ENCODE measurements at regions of chr2 and their contacts with region 1.

Region 1: DNA sequence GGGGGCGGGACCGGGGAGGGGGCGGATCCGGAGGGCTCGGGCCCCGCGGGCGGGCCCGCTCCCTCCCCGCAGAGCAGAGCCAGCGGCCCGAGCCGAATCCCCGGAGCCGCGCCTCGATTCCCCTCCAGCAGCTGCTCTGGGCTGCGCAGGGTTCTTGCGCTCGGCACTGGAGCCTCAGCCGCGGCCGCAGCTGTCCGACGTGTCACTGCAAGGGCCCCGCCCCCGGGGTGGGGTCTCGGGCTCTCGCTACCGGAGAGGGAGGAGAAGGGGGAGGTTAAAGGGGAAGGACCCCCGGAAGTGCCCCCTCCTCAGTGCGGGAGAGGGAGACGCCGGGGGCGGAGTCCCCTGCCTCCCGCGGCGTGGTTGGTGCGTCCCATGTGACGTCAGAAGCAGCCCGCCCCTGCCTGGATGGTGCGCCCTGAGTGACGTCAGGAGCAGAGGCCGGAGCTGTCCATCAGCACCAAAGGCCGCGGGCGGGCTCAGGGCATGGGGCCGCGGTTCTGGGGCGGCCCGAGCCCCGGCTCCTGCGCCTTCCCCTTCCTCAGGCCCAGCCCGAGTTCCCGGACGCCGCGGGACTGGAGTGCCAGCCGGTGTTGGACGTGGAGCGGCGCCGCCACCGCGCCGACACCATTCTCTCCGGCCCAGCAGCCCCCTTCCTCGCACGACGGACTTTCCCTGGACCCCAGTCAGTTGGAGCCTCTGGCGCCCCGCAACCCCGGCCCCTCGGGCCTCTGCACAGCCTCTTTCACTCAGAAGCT is at the starts of genes CHPF and TMEM198:
- DNase-seq: peak; percentile 98 to 99
- H3K4me3 ChIP-seq: peak within 1 kb of the TSS; percentile 71 to 98
- H3K27ac ChIP-seq: peak within 1 kb of the TSS; percentile 86 to 92
- H3K4me1 ChIP-seq: peaks cover 9 to 29% (median 24%) of the 10 kb centered on the region in 4 donors
- H3K27me3 ChIP-seq: no peaks in the 10 kb centered on the region
- CTCF ChIP-seq: no peak

Region 2: DNA sequence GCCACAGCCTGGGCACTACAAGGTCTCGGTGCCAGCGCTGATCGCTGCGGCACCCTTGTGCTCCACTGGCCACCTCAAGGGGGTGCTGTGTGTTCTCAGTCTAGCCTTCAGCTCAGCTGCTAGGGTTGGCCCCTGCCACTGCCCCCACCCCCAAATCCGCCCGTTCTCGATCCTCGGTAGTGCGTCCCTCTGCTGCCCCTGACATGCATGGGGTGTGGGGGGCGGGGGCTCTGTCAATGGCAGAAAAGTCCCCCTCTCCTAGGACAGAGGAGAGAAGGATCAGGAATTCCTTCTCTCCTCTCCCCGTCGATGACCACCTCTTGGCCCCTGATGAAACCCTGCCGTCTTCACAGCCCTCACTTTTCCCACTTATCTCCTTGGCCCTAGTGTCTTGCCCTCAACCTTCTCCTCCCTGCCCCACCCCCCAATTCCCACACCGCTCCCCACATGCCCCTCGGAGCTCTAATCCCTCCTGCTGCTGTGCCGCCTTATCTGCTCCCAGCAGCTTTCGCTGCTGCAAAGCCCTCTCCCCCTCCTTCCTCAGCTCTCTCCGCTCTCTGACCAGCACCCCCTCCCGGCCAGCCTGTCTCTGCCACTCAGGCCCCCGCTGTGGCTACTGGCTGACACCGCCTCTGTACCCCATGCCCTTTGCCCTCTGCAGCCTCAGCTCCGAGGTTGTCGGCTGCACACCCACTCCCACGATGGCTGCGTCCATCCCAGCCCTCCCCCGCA is 33.8 kb before region 1 on chr2:
- intact Hi-C with region 1: no loop called
- DNase-seq: peak; percentile 49 to 81
- H3K4me3 ChIP-seq: peak overlapping the region; percentile 25 to 47
- H3K27ac ChIP-seq: no peak overlapping the region
- H3K4me1 ChIP-seq: peaks cover 0 to 53% (median 36%) of the 10 kb centered on the region in 4 donors
- H3K27me3 ChIP-seq: peaks cover 0 to 41% of the 10 kb centered on the region in 2 donors
- CTCF ChIP-seq: peak; percentile 53 to 68

Region 3: DNA sequence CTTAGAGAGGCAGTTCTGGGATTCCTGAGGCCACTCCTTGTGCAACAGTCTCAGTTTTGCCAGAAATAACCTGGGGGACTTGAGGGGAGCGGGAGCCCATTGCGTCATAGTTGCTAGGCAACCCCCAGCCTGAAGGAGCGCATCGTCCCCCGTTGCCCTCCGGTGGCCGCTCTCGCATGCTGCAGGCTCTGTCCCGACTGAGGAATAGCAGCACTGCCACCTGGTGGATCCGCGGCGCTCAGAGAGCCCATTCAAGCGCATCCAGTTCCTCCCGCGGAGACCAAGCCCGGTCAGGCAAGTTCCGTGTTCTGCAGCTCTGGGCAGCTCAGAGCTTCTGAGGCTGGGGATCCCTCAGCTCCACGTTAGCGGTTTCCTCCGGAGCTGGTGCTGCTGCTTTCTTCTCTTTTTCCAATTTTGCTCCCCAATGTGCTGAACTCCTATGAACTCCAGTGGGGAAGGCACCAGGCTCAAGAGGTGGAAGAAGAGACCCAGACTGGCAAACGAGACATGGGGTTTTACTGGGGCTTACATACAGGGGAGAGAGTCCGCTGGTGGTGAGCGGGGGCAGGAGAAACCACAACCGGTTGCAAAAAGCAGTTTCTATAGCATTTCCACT is 98.8 kb after region 1 on chr2:
- intact Hi-C with region 1: loop called (anchors 5 kb)
- DNase-seq: peak; percentile 98
- H3K4me3 ChIP-seq: no peak overlapping the region
- H3K27ac ChIP-seq: no peak overlapping the region
- H3K4me1 ChIP-seq: peaks cover 0 to 23% (median 15%) of the 10 kb centered on the region in 4 donors
- H3K27me3 ChIP-seq: no peaks in the 10 kb centered on the region
- CTCF ChIP-seq: peak; percentile 99 to 100

Region 4: DNA sequence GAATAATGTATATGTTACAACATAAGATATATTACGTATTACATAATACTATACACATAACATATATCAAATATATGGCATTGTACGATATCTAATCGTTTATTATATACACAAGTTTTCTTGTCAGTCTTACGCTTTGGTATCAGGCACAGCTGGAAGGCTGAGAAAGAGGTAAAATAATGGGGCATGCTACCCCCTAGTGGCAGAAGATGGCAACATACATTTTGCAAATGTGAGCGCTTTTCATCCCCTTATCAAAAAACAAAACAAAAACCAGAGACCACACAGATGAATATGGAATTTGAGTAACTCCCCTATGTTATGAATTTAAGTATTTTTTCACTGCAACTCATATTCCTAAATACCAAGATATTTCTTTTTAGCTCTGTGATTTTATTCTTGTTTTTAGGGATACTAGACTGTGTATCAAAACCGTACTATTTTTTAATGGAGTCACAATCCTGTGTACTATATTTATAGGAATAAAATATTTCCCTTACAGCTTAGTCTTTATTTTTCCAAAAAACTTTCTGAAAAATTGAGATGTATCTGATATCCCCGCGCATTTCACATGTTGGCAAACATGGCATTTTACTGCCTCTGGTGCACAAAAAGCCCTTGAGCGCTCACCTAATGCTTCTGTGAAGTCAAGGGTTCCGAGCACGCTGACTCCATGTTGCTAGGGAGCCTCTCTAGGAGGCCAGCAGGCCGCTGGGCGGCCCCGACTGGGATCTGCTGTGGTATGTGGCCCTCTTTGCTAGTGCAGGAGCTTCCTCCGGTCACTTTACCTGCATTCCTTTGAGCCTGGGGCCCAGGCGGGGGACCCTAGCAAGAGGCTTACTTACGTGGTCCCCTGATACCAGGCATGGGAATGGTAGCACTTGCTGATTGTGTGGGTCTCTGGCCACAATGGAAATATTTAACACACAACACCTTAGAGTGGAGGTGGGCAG is 146.2 kb after region 1 on chr2:
- intact Hi-C with region 1: loop called (anchors 1 kb)
- DNase-seq: peak in 1 of 2 donors; percentile 30
- H3K4me3 ChIP-seq: peak overlapping the region in 1 of 2 donors; percentile 18
- H3K27ac ChIP-seq: peak overlapping the region; percentile 68 to 86
- H3K4me1 ChIP-seq: peaks cover 0 to 38% (median 25%) of the 10 kb centered on the region in 4 donors
- H3K27me3 ChIP-seq: no peaks in the 10 kb centered on the region
- CTCF ChIP-seq: peak; percentile 71 to 73